Activated CD4-positive, alpha-beta T cell treated with anti-CD3 and anti-CD28 coated beads for 36 hours (primary cell): ENCODE measurements at regions of chr18 and their contacts with region 1.

Region 1: GRCh38 chr18:21111341-21112139 is at the start of gene ROCK1:
- DNase-seq: peak; percentile 99
- ATAC-seq: peak; percentile 86
- H3K4me3 Mint-ChIP-seq: no peak within 1 kb of the TSS
- H3K27ac Mint-ChIP-seq: peak within 1 kb of the TSS; percentile 98
- H3K4me1 Mint-ChIP-seq: peaks cover 3% of the 10 kb centered on the region
- H3K27me3 Mint-ChIP-seq: no peaks in the 10 kb centered on the region
- total RNA-seq, gene ROCK1: 47.1 to 55.5 TPM

Region 2: GRCh38 chr18:20996418-20996817 is 115.1 kb before region 1 on chr18:
- CTCF ChIA-PET with region 1: no interaction called
- POLR2A ChIA-PET with region 1: no interaction called
- intact Hi-C with region 1: loop called (anchors 5 to 10 kb)
- DNase-seq: no peak
- ATAC-seq: no peak
- H3K4me3 Mint-ChIP-seq: no peak overlapping the region
- H3K27ac Mint-ChIP-seq: no peak overlapping the region
- H3K4me1 Mint-ChIP-seq: peaks cover 31% of the 10 kb centered on the region
- H3K27me3 Mint-ChIP-seq: no peaks in the 10 kb centered on the region

Region 3: DNA sequence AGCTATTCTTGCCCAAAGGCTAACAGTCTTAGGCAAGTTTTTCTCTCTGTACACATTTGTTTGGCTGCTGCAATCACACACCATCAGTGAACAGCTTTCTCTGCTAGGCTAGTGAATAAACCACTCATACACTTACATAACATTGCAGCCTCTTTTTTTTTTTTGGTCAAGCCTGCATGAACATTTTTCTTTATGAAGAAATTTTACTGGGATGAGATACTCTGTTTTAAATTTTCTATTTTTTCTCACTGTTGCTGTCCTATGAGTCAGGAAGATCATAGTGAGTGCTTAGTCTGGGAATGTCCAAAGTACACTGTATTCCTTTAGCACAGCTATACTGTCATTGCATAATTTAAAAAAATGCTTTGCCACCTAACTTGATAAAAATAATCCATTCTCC is 58.4 kb before region 1 on chr18:
- CTCF ChIA-PET with region 1: no interaction called
- POLR2A ChIA-PET with region 1: no interaction called
- intact Hi-C with region 1: loop called in 1 of 2 experiments (anchors 5 kb)
- DNase-seq: no peak
- ATAC-seq: no peak
- H3K4me3 Mint-ChIP-seq: no peak overlapping the region
- H3K27ac Mint-ChIP-seq: no peak overlapping the region
- H3K4me1 Mint-ChIP-seq: peaks cover 32% of the 10 kb centered on the region
- H3K27me3 Mint-ChIP-seq: no peaks in the 10 kb centered on the region

Region 4: GRCh38 chr18:21163647-21164547 is 52.4 kb after region 1 on chr18:
- CTCF ChIA-PET with region 1: no interaction called
- POLR2A ChIA-PET with region 1: no interaction called
- intact Hi-C with region 1: loop called in 1 of 2 experiments (anchors 5 kb)
- DNase-seq: no peak
- ATAC-seq: no peak
- H3K4me3 Mint-ChIP-seq: no peak overlapping the region
- H3K27ac Mint-ChIP-seq: no peak overlapping the region
- H3K4me1 Mint-ChIP-seq: no peaks in the 10 kb centered on the region
- H3K27me3 Mint-ChIP-seq: peaks cover 3% of the 10 kb centered on the region

Region 5: DNA sequence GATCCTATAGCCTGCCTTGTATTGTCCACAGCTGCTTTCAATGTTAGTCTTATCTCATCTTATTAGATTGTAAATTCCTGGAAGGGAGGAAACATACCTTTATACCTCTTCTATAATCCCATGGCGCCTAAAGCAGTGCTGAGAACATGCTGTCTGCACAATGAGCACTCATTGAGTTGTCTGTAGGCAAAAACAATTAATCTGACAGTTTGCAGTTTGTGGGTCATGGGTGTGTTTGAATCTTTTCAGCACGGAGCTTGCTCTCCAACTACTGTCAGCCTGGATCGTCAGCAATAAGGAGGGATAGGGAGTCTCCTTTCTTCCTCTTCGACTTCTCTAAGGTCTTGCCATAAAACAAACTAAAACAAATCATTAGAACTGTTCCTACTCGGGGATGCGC is 103.9 kb after region 1 on chr18:
- CTCF ChIA-PET with region 1: no interaction called
- POLR2A ChIA-PET with region 1: no interaction called
- intact Hi-C with region 1: no loop called
- DNase-seq: no peak
- ATAC-seq: no peak
- H3K4me3 Mint-ChIP-seq: no peak overlapping the region
- H3K27ac Mint-ChIP-seq: no peak overlapping the region
- H3K4me1 Mint-ChIP-seq: no peaks in the 10 kb centered on the region
- H3K27me3 Mint-ChIP-seq: no peaks in the 10 kb centered on the region

Region 6: GRCh38 chr18:21600526-21601410 is 489.2 kb after region 1 on chr18 and contains the start of gene ESCO1:
- CTCF ChIA-PET with region 1: no interaction called
- POLR2A ChIA-PET with region 1: no interaction called
- intact Hi-C with region 1: loop called in 1 of 2 experiments (anchors 1 kb)
- DNase-seq: peak; percentile 97
- ATAC-seq: peak; percentile 91
- H3K4me3 Mint-ChIP-seq: peak within 1 kb of the TSS; percentile 97
- H3K27ac Mint-ChIP-seq: peak within 1 kb of the TSS; percentile 94
- H3K4me1 Mint-ChIP-seq: peaks cover 41% of the 10 kb centered on the region
- H3K27me3 Mint-ChIP-seq: no peaks in the 10 kb centered on the region
- total RNA-seq, gene ESCO1: 21.7 to 26.5 TPM

Region 7: DNA sequence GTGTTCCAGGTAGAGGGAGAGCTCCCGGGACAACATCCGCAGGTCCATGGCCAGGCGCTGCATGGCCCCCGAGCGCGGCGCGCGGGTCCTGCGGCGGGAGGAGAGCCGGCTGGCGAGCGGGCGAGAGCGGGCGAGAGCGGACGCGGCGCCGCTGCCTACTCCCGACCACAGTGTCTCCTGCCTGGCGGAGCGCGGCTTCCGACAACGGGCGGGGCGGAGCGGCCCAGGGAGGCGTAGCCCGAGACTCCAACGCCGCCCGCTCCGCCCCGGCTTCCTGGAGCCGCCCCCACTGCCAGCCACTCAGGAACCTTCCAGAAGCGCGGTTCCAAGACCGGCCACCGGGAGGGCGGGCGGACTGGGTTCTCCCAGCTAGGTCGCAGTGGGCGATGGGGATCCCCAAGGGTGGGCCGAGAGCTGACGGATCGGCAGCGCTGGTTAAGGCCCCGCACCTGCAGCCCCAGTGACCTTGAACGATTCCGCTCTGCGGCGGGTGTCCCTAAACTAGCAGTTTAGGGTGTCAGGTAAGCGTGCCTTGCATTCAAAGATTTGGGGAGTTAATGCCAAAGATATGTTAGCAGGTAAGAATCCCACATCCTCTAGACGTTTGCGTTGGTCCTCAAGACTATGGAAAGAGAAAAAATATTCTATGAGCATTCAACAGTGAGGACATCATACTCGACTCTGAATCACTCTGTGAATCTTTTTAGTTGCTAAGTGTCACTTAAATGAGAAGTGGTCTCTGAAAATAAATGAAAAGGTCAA is 593.2 kb after region 1 on chr18 and contains the start of gene ABHD3:
- CTCF ChIA-PET with region 1: no interaction called
- POLR2A ChIA-PET with region 1: no interaction called
- intact Hi-C with region 1: loop called in 1 of 2 experiments (anchors 1 kb)
- DNase-seq: peak; percentile 93
- ATAC-seq: peak; percentile 95
- H3K4me3 Mint-ChIP-seq: peak within 1 kb of the TSS; percentile 87
- H3K27ac Mint-ChIP-seq: peak within 1 kb of the TSS; percentile 93
- H3K4me1 Mint-ChIP-seq: peaks cover 24% of the 10 kb centered on the region
- H3K27me3 Mint-ChIP-seq: no peaks in the 10 kb centered on the region
- total RNA-seq, gene ABHD3: 13.7 to 14.3 TPM